ENCODE measurements at regions of chr17 and their contacts with region 1.

Region 1: DNA sequence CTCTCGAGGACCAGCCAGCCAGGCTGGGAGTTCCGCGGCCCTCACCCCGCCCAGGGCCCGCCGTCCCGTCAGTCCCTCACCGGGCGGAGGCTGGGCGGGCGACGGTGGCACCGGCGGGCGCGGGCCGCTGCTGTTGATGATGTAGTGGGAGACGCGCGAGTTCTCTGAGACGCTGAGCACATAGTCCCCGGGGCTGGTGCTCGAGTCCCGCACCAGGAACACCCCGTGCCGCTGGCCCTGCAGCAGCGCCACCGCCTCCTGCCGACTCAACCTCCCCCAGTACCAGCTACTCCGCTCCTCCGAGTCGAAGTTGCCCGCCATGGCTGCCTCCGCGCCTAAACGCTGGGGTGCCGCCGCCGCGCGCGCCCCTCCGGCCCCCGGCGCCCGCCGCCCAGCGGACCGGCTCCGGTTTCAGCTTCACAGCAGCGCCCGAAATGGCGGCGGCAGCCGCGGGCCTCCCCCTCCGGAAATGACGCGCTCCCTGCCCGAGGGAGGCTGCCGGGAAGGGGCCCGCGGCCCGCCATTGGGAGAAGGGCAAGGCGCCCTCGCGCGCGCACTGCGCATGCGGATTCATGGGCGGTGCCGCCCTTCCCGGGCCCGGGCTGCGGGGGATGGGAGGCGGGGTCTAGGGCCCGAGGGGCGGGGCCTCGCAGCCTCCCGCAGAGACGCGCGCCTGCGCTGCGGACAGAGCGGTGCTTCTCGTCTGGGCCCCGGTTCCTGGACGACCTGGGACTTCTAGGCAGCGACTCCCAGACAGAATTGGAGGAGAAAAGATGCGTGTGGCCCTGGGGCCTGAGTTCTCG is at the start of gene CRK:
- DNase-seq: peak; percentile 98
- H3K4me3 Mint-ChIP-seq: peak within 1 kb of the TSS; percentile 86
- H3K27ac Mint-ChIP-seq: peak within 1 kb of the TSS; percentile 81
- H3K4me1 Mint-ChIP-seq: peaks cover 57% of the 10 kb centered on the region
- H3K27me3 Mint-ChIP-seq: peaks cover under 1% of the 10 kb centered on the region
- total RNA-seq, gene CRK: 10.6 to 14.1 TPM

Region 2: GRCh38 chr17:828761-829160 is 627.2 kb before region 1 on chr17:
- CTCF ChIA-PET with region 1: no interaction called
- intact Hi-C with region 1: no loop called
- DNase-seq: no peak
- H3K4me3 Mint-ChIP-seq: no peak overlapping the region
- H3K27ac Mint-ChIP-seq: no peak overlapping the region
- H3K4me1 Mint-ChIP-seq: no peaks in the 10 kb centered on the region
- H3K27me3 Mint-ChIP-seq: no peaks in the 10 kb centered on the region

Region 3: GRCh38 chr17:1241929-1242328 is 214.1 kb before region 1 on chr17:
- CTCF ChIA-PET with region 1: no interaction called
- intact Hi-C with region 1: no loop called
- DNase-seq: no peak
- H3K4me3 Mint-ChIP-seq: no peak overlapping the region
- H3K27ac Mint-ChIP-seq: no peak overlapping the region
- H3K4me1 Mint-ChIP-seq: peaks cover 16% of the 10 kb centered on the region
- H3K27me3 Mint-ChIP-seq: peaks cover 23% of the 10 kb centered on the region

Region 4: GRCh38 chr17:1260086-1260769 is 195.8 kb before region 1 on chr17:
- CTCF ChIA-PET with region 1: no interaction called
- intact Hi-C with region 1: no loop called
- DNase-seq: no peak
- H3K4me3 Mint-ChIP-seq: no peak overlapping the region
- H3K27ac Mint-ChIP-seq: no peak overlapping the region
- H3K4me1 Mint-ChIP-seq: peaks cover 3% of the 10 kb centered on the region
- H3K27me3 Mint-ChIP-seq: peaks cover 5% of the 10 kb centered on the region

Region 5: GRCh38 chr17:1399679-1400512 is 56.1 kb before region 1 on chr17 and contains the start of gene YWHAE:
- CTCF ChIA-PET with region 1: no interaction called
- intact Hi-C with region 1: loop called (anchors 1 kb)
- DNase-seq: peak; percentile 98
- H3K4me3 Mint-ChIP-seq: peak within 1 kb of the TSS; percentile 99
- H3K27ac Mint-ChIP-seq: peak within 1 kb of the TSS; percentile 100
- H3K4me1 Mint-ChIP-seq: peaks cover 32% of the 10 kb centered on the region
- H3K27me3 Mint-ChIP-seq: no peaks in the 10 kb centered on the region
- total RNA-seq, gene YWHAE: 528 to 576 TPM

Region 6: GRCh38 chr17:1438593-1439083 is 17.4 kb before region 1 on chr17:
- CTCF ChIA-PET with region 1: no interaction called
- intact Hi-C with region 1: no loop called
- DNase-seq: no peak
- H3K4me3 Mint-ChIP-seq: no peak overlapping the region
- H3K27ac Mint-ChIP-seq: peak overlapping the region; percentile 8
- H3K4me1 Mint-ChIP-seq: peaks cover 21% of the 10 kb centered on the region
- H3K27me3 Mint-ChIP-seq: no peaks in the 10 kb centered on the region

Region 7: GRCh38 chr17:1488030-1488863 is 32.2 kb after region 1 on chr17:
- CTCF ChIA-PET with region 1: no interaction called
- intact Hi-C with region 1: loop called (anchors 1 kb)
- DNase-seq: peak; percentile 59
- H3K4me3 Mint-ChIP-seq: peak overlapping the region; percentile 78
- H3K27ac Mint-ChIP-seq: no peak overlapping the region
- H3K4me1 Mint-ChIP-seq: peaks cover 32% of the 10 kb centered on the region
- H3K27me3 Mint-ChIP-seq: peaks cover 8% of the 10 kb centered on the region

Region 8: GRCh38 chr17:1561400-1562175 is 105.6 kb after region 1 on chr17:
- CTCF ChIA-PET with region 1: no interaction called
- intact Hi-C with region 1: loop called (anchors 5 kb)
- DNase-seq: peak; percentile 34
- H3K4me3 Mint-ChIP-seq: peak overlapping the region; percentile 82
- H3K27ac Mint-ChIP-seq: peak overlapping the region; percentile 71
- H3K4me1 Mint-ChIP-seq: peaks cover 40% of the 10 kb centered on the region
- H3K27me3 Mint-ChIP-seq: no peaks in the 10 kb centered on the region

Measured in activated naive CD4-positive, alpha-beta T cell treated with anti-CD3 and anti-CD28 coated beads for 36 hours (primary cell).